CD4-positive, alpha-beta T cell (primary cell): ENCODE measurements at regions of chr14 and their contacts with region 1.

Region 1: DNA sequence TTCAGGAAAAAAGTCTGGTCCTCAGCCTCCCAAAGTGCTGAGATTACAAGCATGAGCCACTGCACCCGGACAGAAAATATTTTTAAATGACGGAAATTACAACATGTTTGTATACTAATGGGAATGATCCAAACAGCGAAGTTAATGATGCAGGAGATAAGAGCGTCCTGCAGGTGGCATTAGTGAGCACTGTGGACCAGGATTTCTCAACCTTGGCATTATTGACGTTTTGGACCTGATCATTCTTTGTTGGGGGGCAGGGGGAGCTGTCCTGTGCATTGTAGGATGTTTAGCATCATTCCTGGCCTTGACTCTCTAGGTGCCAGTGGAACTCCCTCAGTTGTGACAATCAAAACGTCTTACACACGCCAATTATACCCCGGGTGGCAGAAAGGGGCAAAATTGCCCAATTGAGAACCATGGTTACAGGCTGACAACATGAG is 34.1 kb downstream of the SCFD1 start:
- DNase-seq: peak in 9 of 14 experiments; percentile 1 to 68 (median 8)
- ATAC-seq: peak; percentile 60
- H3K4me3 ChIP-seq: no peak overlapping the region
- H3K4me3 Mint-ChIP-seq: no peak overlapping the region
- H3K27ac ChIP-seq: no peak overlapping the region
- H3K27ac Mint-ChIP-seq: no peak overlapping the region
- H3K4me1 ChIP-seq: no peaks in the 10 kb centered on the region
- H3K4me1 Mint-ChIP-seq: no peaks in the 10 kb centered on the region
- H3K27me3 ChIP-seq: no peaks in the 10 kb centered on the region
- H3K27me3 Mint-ChIP-seq: no peaks in the 10 kb centered on the region
- CTCF ChIP-seq: peak; percentile 65

Region 2: DNA sequence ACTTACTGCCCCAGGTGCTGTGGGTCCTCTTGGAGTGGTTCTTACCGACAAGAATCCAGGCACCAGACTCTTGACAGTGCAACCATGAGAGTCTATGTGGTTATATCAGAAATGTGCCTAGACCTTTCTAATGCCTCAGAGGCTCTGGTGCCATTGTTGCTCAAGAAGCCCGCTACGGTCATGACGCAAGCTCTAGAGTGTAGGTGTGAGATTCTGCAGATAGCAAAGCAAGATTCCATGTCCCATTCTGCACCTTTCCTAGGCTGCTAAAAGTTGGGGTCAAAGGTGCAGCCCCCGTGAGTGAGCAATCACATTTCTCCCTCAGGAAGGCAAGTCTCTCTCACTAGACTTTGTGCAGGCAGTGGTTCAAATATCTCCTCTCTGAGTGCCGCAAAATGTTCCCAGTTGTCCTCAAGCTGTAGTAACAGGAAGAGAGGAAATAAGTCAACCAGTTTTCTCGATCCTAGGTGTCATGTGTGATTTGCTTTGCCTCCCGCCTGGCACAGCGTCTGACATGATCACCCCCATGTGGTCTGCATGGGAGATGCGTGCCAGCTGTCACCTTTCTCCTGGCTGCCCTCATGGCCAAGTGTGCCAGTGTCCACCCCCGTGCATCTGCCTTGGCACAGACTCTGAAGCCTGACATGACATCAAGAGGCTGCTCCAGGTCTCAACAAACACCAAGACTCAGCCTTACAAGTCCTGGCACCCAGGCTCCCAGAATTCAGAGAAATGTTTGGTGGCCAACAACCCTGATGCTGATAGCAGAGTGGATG is 95.6 kb after region 1 on chr14:
- CTCF ChIA-PET with region 1: interaction called, 3 read pairs
- POLR2A ChIA-PET with region 1: no interaction called
- intact Hi-C with region 1: loop called in 1 of 2 experiments (anchors 5 kb)
- DNase-seq: peak in 2 of 14 experiments; percentile 3 to 6
- ATAC-seq: no peak
- H3K4me3 ChIP-seq: no peak overlapping the region
- H3K4me3 Mint-ChIP-seq: no peak overlapping the region
- H3K27ac ChIP-seq: no peak overlapping the region
- H3K27ac Mint-ChIP-seq: no peak overlapping the region
- H3K4me1 ChIP-seq: no peaks in the 10 kb centered on the region
- H3K4me1 Mint-ChIP-seq: no peaks in the 10 kb centered on the region
- H3K27me3 ChIP-seq: no peaks in the 10 kb centered on the region
- H3K27me3 Mint-ChIP-seq: peaks cover 6% of the 10 kb centered on the region
- CTCF ChIP-seq: no peak

Region 3: GRCh38 chr14:30906752-30907658 is 250.8 kb after region 1 on chr14:
- CTCF ChIA-PET with region 1: no interaction called
- POLR2A ChIA-PET with region 1: no interaction called
- intact Hi-C with region 1: loop called (anchors 1 to 5 kb)
- DNase-seq: peak in 3 of 14 experiments; percentile 8 to 20 (median 18)
- ATAC-seq: no peak
- H3K4me3 ChIP-seq: no peak overlapping the region
- H3K4me3 Mint-ChIP-seq: no peak overlapping the region
- H3K27ac ChIP-seq: no peak overlapping the region
- H3K27ac Mint-ChIP-seq: no peak overlapping the region
- H3K4me1 ChIP-seq: no peaks in the 10 kb centered on the region
- H3K4me1 Mint-ChIP-seq: no peaks in the 10 kb centered on the region
- H3K27me3 ChIP-seq: no peaks in the 10 kb centered on the region
- H3K27me3 Mint-ChIP-seq: no peaks in the 10 kb centered on the region
- CTCF ChIP-seq: no peak

Region 4: GRCh38 chr14:31530136-31530535 is 873.9 kb after region 1 on chr14:
- CTCF ChIA-PET with region 1: no interaction called
- POLR2A ChIA-PET with region 1: no interaction called
- intact Hi-C with region 1: no loop called
- DNase-seq: no peak
- ATAC-seq: no peak
- H3K4me3 ChIP-seq: no peak overlapping the region
- H3K4me3 Mint-ChIP-seq: no peak overlapping the region
- H3K27ac ChIP-seq: no peak overlapping the region
- H3K27ac Mint-ChIP-seq: no peak overlapping the region
- H3K4me1 ChIP-seq: no peaks in the 10 kb centered on the region
- H3K4me1 Mint-ChIP-seq: no peaks in the 10 kb centered on the region
- H3K27me3 ChIP-seq: no peaks in the 10 kb centered on the region
- H3K27me3 Mint-ChIP-seq: peaks cover 4% of the 10 kb centered on the region
- CTCF ChIP-seq: no peak

Region 5: DNA sequence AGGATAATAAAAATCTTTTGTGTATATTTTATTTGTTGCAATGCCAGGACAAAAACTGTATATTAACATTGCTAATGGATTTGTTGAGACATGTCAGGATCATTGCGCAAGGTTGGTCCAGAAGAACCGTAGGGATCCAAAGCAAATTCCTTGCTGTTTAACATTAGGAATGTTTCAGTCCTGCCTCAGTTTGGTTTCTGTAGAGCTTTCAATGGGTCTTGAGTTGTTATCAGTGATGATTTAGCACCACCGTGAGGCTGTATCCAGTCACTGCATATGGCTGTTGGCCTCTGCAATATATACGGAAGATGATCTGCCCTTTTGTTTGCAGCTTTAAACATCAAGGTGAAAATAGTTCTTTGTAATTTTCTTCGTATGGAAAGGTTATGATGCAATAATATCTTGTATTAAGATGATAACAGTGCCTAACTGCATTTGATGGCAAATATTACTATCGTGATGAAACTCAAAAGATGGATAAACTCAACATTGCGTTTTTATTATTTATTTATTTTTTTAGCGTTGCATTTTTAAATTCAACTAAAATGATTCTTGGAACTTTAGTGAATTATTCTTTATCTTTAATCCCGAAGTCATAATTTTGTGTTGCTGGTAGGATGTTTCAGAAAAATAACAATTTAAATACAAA is 1904.1 kb after region 1 on chr14:
- CTCF ChIA-PET with region 1: no interaction called
- POLR2A ChIA-PET with region 1: no interaction called
- intact Hi-C with region 1: loop called in 1 of 2 experiments (anchors 5 kb)
- DNase-seq: peak in 4 of 14 experiments; percentile 7 to 54 (median 44)
- ATAC-seq: peak; percentile 51
- H3K4me3 ChIP-seq: no peak overlapping the region
- H3K4me3 Mint-ChIP-seq: no peak overlapping the region
- H3K27ac ChIP-seq: no peak overlapping the region
- H3K27ac Mint-ChIP-seq: no peak overlapping the region
- H3K4me1 ChIP-seq: peaks cover 7% of the 10 kb centered on the region
- H3K4me1 Mint-ChIP-seq: peaks cover 18% of the 10 kb centered on the region
- H3K27me3 ChIP-seq: no peaks in the 10 kb centered on the region
- H3K27me3 Mint-ChIP-seq: no peaks in the 10 kb centered on the region
- CTCF ChIP-seq: peak; percentile 40